K562 (cell line): ENCODE measurements at regions of chr10 and their contacts with region 1.

Region 1: DNA sequence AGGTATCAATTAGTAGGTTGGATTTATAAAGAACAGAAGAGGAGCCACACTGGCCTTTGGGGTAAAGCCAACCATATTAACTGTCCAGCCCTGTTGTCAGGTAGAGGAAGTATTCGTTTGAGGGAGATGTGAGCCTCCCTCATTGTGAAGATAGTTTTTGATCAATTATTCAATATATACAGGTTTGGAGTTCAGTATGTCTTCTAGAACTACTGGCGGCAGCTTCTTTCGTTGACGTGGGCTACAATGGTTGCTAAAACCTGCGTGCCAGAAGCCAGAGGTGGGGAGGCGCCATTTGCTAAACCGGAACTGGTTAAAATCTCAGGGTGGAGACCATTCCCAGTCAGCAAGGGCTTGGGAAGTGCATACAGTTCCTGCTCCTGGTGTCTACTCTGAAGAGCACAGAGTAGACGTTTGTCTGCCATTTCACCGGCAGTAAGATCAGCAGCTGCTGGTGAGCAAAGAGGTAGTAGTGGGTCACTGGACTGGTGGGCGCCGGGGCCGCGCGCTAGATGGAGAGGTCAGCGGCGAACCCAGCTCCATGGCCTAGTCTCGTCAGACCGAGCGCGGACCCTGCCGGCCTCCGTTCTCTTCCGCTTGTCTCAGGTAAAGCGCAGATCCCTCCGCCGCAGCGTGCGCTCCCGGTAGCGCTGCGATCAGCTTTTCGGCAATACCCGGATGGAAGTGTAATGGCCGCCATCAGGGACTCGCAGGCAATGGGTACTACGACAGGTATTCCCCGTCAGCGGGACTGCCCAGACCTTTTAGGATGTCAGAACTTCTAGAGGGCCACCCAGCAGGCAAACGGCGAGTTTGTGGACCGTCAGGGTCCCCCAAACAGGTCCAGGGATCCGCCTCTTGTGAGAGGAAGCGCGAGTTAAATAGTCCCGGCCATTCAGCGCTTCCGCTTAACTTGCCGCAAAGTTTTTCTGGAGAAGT is at the start of gene ZNF518A:
- DNase-seq: peak; percentile 68 to 96 (median 76)
- ATAC-seq: peak; percentile 83
- H3K4me3 ChIP-seq: peak within 1 kb of the TSS; percentile 57
- H3K27ac ChIP-seq: peak within 1 kb of the TSS; percentile 94
- H3K4me1 ChIP-seq: peaks cover 0 to 14% of the 10 kb centered on the region in 2 experiments; a peak in 3 of 5 replicates
- H3K27me3 ChIP-seq: no peaks in the 10 kb centered on the region
- CTCF ChIP-seq: 0 out of 6 replicates have a peak, but pooled peaks of 1 of the 3 experiments have one; percentile 6
- EP300 ChIP-seq: no peak
- POLR2A ChIP-seq: peak; percentile 96
- RAD21 ChIP-seq: peak; percentile 10 to 38; a peak in 2 of 4 replicates
- polyA plus RNA-seq, gene ZNF518A: 6.3 to 11.4 TPM

Region 2: DNA sequence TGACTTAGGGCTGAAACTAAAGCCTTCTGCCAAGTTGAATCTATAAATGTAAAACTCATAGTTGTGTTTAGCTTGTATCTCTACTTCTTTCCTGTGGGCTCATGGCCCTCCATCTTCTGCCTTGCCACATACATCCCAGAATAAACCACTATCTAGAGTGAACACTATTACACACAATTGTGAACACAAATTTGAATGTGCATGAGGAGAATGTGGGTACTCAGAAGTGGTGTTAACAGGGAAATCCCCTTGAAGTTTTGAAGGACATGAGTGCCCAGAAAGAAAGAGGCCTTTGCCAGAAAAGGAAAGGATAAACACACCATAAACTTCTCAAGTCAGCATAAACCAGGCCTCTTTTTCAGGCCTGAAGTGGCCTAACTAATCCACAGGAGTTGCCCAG is 106.5 kb before region 1 on chr10:
- CTCF ChIA-PET with region 1: no interaction called
- POLR2A ChIA-PET with region 1: interaction called, 10 read pairs
- in situ Hi-C with region 1: no loop called
- intact Hi-C with region 1: no loop called
- DNase-seq: no peak
- ATAC-seq: no peak
- H3K4me3 ChIP-seq: no peak overlapping the region
- H3K27ac ChIP-seq: no peak overlapping the region
- H3K4me1 ChIP-seq: peaks cover 4 to 12% of the 10 kb centered on the region in 2 experiments; a peak in 4 of 5 replicates
- H3K27me3 ChIP-seq: no peaks in the 10 kb centered on the region
- CTCF ChIP-seq: no peak
- EP300 ChIP-seq: no peak
- POLR2A ChIP-seq: no peak
- RAD21 ChIP-seq: no peak

Region 3: GRCh38 chr10:96043033-96043932 is 86.4 kb before region 1 on chr10 and contains the start of gene CCNJ:
- CTCF ChIA-PET with region 1: interaction called, 5 read pairs
- POLR2A ChIA-PET with region 1: interaction called, 17 read pairs
- in situ Hi-C with region 1: loop called (anchors 5 kb)
- intact Hi-C with region 1: no loop called
- DNase-seq: peak; percentile 81 to 97 (median 86)
- ATAC-seq: peak; percentile 93
- H3K4me3 ChIP-seq: peak within 1 kb of the TSS; percentile 75
- H3K27ac ChIP-seq: peak within 1 kb of the TSS; percentile 89
- H3K4me1 ChIP-seq: peaks cover 11 to 16% of the 10 kb centered on the region in 2 experiments; a peak in 4 of 5 replicates
- H3K27me3 ChIP-seq: no peaks in the 10 kb centered on the region
- CTCF ChIP-seq: peak in 2 of 3 experiments; percentile 16 to 23; a peak in 2 of 6 replicates
- EP300 ChIP-seq: no peak
- POLR2A ChIP-seq: peak; percentile 73
- RAD21 ChIP-seq: peak; percentile 5 to 23; a peak in 1 of 4 replicates
- polyA plus RNA-seq, gene CCNJ: 0.69 to 2.4 TPM

Region 4: DNA sequence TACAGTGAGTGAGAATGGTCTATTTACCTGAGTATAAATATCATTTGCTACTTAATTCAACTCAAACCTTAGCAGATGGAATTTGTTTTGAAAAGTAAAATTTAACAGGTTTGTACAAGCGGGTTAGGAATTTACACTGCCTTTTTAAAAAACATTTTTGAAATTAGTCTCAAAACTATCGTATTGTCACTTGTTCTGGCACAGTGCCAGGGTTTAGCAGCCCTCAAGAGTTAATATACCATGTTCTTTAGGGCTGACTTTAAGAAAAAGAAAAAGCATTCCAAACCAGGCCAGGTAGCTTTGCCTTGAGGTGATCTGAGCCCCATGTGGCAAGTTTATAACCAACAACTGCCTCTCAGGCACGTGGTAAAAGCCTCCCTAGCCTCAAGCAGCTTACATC is 68.4 kb before region 1 on chr10:
- CTCF ChIA-PET with region 1: no interaction called
- POLR2A ChIA-PET with region 1: interaction called, 16 read pairs
- in situ Hi-C with region 1: no loop called
- intact Hi-C with region 1: no loop called
- DNase-seq: no peak
- ATAC-seq: no peak
- H3K4me3 ChIP-seq: no peak overlapping the region
- H3K27ac ChIP-seq: no peak overlapping the region
- H3K4me1 ChIP-seq: peaks cover 0 to 14% of the 10 kb centered on the region in 2 experiments; a peak in 3 of 5 replicates
- H3K27me3 ChIP-seq: no peaks in the 10 kb centered on the region
- CTCF ChIP-seq: no peak
- EP300 ChIP-seq: no peak
- POLR2A ChIP-seq: no peak
- RAD21 ChIP-seq: no peak

Region 5: DNA sequence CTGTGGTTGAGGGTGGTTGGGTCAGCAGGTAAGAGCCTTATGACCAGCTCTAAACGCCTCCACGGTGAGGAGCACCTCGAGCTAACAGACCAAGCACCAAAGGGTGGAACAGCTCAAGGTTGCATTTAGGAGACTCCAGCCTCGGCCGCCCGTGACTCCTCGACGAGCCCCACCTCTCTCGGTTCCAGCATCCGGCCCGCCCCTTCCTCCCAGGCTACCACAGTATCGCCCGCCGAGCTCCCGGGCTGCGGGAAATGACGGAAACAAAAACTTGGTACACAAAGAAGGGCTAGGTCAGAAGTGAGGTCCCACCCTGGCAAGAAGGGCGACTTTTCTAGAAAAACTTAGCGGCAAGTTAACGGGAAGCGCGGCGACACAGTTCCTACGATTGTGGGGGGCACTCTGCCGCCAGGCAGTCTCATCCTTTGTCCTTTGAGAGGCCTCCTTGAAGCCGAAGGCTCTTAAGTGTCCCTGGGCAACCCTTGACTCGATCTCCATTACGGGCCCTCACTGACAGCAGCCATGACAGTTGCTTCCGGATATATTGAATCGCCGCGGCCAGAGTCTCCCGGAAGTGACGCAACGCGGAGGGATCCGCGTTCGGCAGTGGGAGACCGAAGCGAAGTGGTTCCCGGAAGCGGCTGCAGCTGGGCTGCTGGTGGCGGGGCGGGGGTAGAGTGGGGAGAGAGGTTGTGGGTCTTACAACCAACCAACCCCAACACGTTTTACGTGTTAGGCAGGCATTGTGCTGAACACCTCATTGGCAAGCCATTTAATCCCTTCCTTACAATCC is 39.8 kb before region 1 on chr10:
- CTCF ChIA-PET with region 1: interaction called, 3 read pairs
- POLR2A ChIA-PET with region 1: interaction called, 41 read pairs
- in situ Hi-C with region 1: no loop called
- intact Hi-C with region 1: loop called (anchors 1 kb)
- DNase-seq: peak; percentile 84 to 96 (median 88)
- ATAC-seq: peak; percentile 98
- H3K4me3 ChIP-seq: peak overlapping the region; percentile 55
- H3K27ac ChIP-seq: peak overlapping the region; percentile 96
- H3K4me1 ChIP-seq: peaks cover 0 to 21% of the 10 kb centered on the region in 2 experiments; a peak in 4 of 5 replicates
- H3K27me3 ChIP-seq: no peaks in the 10 kb centered on the region
- CTCF ChIP-seq: peak in 2 of 3 experiments; percentile 13 to 29; a peak in 2 of 6 replicates
- EP300 ChIP-seq: no peak; the same call in 1 of the 2 replicates
- POLR2A ChIP-seq: peak; percentile 94
- RAD21 ChIP-seq: peak in 1 of 2 experiments; percentile 36; a peak in 2 of 4 replicates

Region 6: GRCh38 chr10:96107623-96108038 is 22.0 kb before region 1 on chr10:
- CTCF ChIA-PET with region 1: no interaction called
- POLR2A ChIA-PET with region 1: interaction called, 7 read pairs
- in situ Hi-C with region 1: no loop called
- intact Hi-C with region 1: loop called (anchors 2 kb)
- DNase-seq: no peak
- ATAC-seq: no peak
- H3K4me3 ChIP-seq: no peak overlapping the region
- H3K27ac ChIP-seq: no peak overlapping the region
- H3K4me1 ChIP-seq: peaks cover 0 to 10% of the 10 kb centered on the region in 2 experiments; a peak in 4 of 5 replicates
- H3K27me3 ChIP-seq: no peaks in the 10 kb centered on the region
- CTCF ChIP-seq: no peak
- EP300 ChIP-seq: no peak
- POLR2A ChIP-seq: no peak
- RAD21 ChIP-seq: no peak

Region 7: DNA sequence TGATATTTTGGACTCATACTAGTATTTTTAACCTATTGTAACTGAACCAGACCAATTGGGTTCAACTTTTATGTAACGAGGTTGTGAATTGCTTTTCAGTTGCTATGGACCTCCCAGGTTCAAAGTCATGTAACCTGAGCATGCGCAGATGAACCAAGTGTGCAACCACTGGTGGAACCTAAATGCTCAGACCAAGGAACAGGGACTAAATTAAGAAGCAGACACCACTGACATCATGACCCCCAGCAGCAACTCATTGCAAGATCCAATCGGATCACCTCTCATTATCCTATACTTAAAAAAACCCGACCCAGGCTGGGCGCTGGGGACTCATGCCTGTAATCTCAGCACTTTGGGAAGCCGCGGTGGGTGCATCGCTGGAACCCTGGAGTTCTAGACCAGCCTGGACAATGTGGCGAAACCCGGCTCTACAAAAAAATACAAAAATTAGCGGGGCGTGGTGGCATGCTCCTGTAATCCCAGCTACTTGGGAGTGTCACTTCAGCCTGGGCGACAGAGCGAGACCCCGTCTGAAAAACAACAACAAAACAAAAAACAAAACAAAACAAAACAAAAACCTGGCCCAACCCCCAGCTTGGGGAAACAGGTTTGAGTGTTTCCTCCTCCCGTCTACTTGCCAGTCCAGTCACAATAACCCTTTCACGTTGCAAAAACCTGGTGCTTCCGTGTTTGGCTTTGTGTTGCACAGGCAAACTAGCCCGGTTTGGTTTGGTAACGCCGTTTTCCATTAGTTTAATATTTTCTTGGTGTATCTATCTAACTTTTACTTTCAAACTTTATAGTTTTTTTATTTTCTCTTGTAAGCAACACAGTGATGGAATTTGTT is 10.8 kb before region 1 on chr10:
- CTCF ChIA-PET with region 1: no interaction called
- POLR2A ChIA-PET with region 1: interaction called, 12 read pairs
- in situ Hi-C with region 1: no loop called
- intact Hi-C with region 1: no loop called
- DNase-seq: no peak
- ATAC-seq: no peak
- H3K4me3 ChIP-seq: no peak overlapping the region
- H3K27ac ChIP-seq: no peak overlapping the region
- H3K4me1 ChIP-seq: peaks cover 5 to 7% of the 10 kb centered on the region in 2 experiments; a peak in 3 of 5 replicates
- H3K27me3 ChIP-seq: no peaks in the 10 kb centered on the region
- CTCF ChIP-seq: no peak
- EP300 ChIP-seq: no peak
- POLR2A ChIP-seq: no peak
- RAD21 ChIP-seq: no peak